Natural killer cell (primary cell): ENCODE measurements at regions of chr15 and their contacts with region 1.

Region 1: DNA sequence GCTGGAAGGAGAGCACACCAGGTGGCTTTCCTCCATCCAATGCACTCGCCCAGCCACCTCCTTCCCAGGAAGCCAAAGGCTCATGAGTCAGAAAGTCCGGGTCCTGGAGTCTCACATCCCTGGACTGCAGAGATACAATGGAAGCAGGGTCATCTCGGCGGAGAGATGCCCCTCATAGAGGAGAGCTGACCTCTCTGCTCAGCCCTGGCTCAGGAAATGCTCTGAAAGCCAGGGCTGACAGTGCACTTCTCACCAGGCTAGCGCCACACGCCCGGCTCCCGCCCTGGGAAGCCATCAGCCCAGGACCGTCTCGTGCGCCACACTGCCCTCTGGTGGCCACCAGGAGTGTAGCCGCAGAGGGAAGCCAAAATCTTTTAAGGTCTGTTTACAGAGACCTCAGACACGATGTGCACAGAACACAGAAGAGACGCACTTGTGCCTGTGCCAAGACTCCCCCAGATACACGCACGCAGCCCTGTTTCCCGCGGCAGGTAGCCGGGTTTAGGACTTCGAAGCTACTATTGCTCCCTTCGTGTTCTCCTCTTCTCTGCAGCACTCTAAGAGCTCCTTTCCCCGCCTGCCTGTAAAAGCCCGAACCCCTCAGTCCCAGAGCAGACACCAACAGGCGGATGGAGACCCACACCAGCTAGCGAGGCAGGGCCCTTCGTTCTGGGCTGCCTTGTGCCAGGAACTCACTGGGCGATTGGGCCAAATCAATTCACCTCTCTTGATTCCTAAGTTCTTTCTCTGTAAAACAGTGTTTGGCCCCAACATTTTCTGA is 9.7 kb downstream of the NTRK3 start:
- DNase-seq: peak; percentile 65 to 83
- ATAC-seq: peak; percentile 87 to 94 (median 87)
- H3K4me3 ChIP-seq: no peak overlapping the region
- H3K4me3 Mint-ChIP-seq: no peak overlapping the region
- H3K27ac ChIP-seq: no peak overlapping the region
- H3K27ac Mint-ChIP-seq: no peak overlapping the region
- H3K4me1 ChIP-seq: peaks cover 7% of the 10 kb centered on the region
- H3K4me1 Mint-ChIP-seq: peaks cover 4 to 8% of the 10 kb centered on the region in 2 donors
- H3K27me3 ChIP-seq: peaks cover 6% of the 10 kb centered on the region
- H3K27me3 Mint-ChIP-seq: peaks cover 9 to 13% of the 10 kb centered on the region in 2 donors
- CTCF ChIP-seq: peak; percentile 95

Region 2: DNA sequence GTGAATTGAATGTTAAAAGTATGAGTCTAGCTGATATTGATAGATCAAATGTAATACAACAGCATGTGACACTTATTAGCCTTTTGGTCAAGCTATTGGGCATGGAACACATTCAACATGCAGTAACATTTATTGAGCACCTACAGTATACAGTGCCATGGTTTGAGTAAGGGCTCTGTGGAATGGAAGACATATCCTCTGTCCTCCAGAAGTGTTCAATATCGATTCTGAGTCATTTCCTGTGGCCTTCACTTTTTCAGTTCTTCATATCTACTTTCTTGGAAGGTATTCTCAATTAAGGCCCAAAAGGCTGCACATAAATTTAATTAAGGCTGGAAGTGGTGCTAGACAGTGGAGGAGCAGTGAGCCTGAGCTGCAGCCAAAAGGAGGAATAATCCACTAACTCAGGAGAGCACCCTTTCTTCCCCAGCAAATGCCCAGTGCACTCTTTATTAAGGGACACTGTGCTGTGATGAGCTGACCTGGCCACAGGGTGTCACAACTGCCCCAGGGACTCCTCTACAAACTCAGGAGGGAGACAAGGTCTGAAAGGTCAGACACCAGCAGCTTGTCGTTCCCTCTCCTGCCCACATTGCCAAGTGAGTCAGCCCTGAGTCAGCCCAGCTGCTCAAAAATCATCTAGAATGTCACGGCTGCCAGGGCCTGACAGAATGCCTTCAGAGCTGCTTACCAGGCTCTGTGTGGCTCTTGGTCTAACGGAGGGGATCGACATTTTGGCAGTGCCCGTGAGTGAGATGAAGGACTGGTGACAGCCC is 1622.4 kb before region 1 on chr15:
- intact Hi-C with region 1: loop called (anchors 2 kb)
- DNase-seq: peak; percentile 16 to 68
- ATAC-seq: peak; percentile 84 to 95 (median 86)
- H3K4me3 ChIP-seq: no peak overlapping the region
- H3K4me3 Mint-ChIP-seq: no peak overlapping the region
- H3K27ac ChIP-seq: no peak overlapping the region
- H3K27ac Mint-ChIP-seq: no peak overlapping the region
- H3K4me1 ChIP-seq: peaks cover 7% of the 10 kb centered on the region
- H3K4me1 Mint-ChIP-seq: peaks cover 0 to 6% of the 10 kb centered on the region in 2 donors
- H3K27me3 ChIP-seq: no peaks in the 10 kb centered on the region
- H3K27me3 Mint-ChIP-seq: peaks cover 10 to 40% of the 10 kb centered on the region in 2 donors
- CTCF ChIP-seq: no peak

Region 3: GRCh38 chr15:87777054-87777561 is 469.7 kb before region 1 on chr15:
- intact Hi-C with region 1: no loop called
- DNase-seq: no peak
- ATAC-seq: no peak
- H3K4me3 ChIP-seq: no peak overlapping the region
- H3K4me3 Mint-ChIP-seq: no peak overlapping the region
- H3K27ac ChIP-seq: no peak overlapping the region
- H3K27ac Mint-ChIP-seq: no peak overlapping the region
- H3K4me1 ChIP-seq: no peaks in the 10 kb centered on the region
- H3K4me1 Mint-ChIP-seq: no peaks in the 10 kb centered on the region
- H3K27me3 ChIP-seq: no peaks in the 10 kb centered on the region
- H3K27me3 Mint-ChIP-seq: no peaks in the 10 kb centered on the region
- CTCF ChIP-seq: no peak

Region 4: GRCh38 chr15:88100181-88100580 is 146.7 kb before region 1 on chr15:
- intact Hi-C with region 1: no loop called
- DNase-seq: no peak
- ATAC-seq: no peak
- H3K4me3 ChIP-seq: no peak overlapping the region
- H3K4me3 Mint-ChIP-seq: no peak overlapping the region
- H3K27ac ChIP-seq: no peak overlapping the region
- H3K27ac Mint-ChIP-seq: no peak overlapping the region
- H3K4me1 ChIP-seq: no peaks in the 10 kb centered on the region
- H3K4me1 Mint-ChIP-seq: no peaks in the 10 kb centered on the region
- H3K27me3 ChIP-seq: no peaks in the 10 kb centered on the region
- H3K27me3 Mint-ChIP-seq: no peaks in the 10 kb centered on the region
- CTCF ChIP-seq: no peak